ENCODE measurements at regions of chr16 and their contacts with region 1.

Region 1: DNA sequence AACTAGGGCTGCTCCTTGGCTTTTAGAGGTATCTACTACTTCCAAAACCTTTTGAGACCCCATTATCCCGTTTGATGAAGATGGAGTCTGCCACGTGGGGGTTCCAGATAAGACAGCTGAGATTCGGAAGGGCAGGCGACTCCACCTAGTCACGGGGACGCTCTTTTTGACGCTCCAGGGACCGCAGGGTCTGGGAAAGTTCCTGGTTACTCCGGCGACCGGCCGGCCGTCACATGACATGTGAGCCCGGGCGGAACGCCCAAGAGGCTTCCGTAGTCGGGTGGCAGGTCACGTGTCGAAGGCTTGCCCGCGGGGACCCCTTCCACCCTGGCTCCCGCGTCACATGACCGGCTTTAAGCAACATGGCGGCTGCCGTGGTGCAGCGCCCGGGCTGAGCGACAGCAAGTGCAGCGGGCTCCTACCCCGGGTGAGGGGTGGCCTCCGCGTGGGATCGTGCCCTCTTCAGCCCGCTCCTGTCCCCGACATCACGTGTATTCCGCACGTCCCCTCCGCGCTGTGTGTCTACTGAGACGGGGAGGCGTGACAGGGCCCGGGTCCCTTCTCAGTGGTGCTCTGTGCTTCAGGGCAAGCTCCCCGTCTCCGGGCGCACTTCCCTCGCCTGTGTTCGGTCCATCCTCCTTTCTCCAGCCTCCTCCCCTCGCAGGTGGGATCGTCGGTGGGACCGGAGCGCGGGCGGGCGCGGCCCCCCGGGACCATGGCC is at the start of gene SPNS1:
- DNase-seq: peak; percentile 97
- H3K4me3 Mint-ChIP-seq: peak within 1 kb of the TSS; percentile 88
- H3K27ac Mint-ChIP-seq: peak within 1 kb of the TSS; percentile 90
- H3K4me1 Mint-ChIP-seq: peaks cover 31% of the 10 kb centered on the region
- H3K27me3 Mint-ChIP-seq: no peaks in the 10 kb centered on the region
- total RNA-seq, gene SPNS1: 11.3 to 12.0 TPM

Region 2: DNA sequence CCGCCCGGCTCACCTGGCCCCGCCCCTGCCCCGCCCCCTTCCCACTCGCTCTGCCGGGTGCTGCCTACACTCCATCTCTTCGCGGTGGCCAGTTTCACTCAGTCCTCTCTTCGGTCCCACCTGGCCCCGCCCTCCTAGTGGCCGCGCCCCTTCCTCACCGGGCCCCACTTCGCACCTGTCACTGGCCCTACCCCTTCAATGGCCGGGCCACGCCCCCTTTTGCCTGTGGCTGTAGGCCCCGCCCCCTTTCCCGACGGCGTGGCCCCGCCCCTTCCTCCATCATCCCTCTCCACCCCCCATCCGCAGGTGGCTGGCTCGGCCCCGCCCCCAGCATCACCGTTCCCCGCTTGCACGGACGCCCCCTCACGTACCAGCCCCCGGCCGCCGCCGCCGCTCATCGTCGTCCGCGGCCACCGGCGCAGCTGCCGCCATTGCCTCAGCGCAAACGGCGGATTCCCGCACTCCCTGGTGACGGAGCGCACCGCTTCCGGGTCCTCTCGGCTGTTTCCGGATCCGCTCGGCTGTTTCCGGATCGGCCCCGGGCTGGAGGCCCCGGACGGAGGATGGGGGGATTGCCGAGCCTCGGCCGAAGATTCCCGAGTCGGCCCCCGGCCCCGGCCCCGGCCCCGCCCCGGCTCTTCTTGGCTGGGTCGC is 49.7 kb before region 1 on chr16 and contains the start of gene RABEP2:
- CTCF ChIA-PET with region 1: no interaction called
- POLR2A ChIA-PET with region 1: no interaction called
- intact Hi-C with region 1: loop called (anchors 1 kb)
- DNase-seq: peak; percentile 97
- H3K4me3 Mint-ChIP-seq: peak within 1 kb of the TSS; percentile 94
- H3K27ac Mint-ChIP-seq: peak within 1 kb of the TSS; percentile 98
- H3K4me1 Mint-ChIP-seq: peaks cover 9% of the 10 kb centered on the region
- H3K27me3 Mint-ChIP-seq: no peaks in the 10 kb centered on the region
- total RNA-seq, gene RABEP2: 11.3 to 12.0 TPM

Region 3: DNA sequence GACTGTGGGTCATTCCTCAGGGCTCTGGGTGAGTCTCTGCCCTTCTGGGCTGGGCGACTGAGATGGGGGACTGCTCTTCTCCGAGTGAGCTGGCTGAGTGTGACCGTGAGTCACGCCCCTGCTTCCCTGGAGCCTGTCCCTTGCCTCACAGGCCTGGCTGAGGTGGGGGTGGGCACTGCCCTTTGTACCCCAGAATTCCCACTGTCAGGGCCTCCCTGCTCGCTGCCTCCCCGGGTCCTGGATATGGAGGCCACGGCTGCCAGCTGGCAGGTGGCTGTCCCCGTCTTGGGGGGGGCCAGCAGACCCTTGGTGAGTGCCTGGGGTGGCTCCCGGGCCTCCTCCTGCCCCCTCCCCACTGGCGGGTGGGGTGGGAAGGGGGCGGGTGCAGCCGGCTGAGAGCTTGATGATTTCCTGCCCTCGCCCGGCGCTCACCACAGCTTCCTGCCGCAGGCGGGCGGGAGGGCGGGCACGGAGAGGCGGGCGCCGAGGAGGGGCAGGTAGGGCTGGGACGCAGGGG is 10.1 kb after region 1 on chr16 and contains the start of gene LAT:
- CTCF ChIA-PET with region 1: interaction called, 31 read pairs
- POLR2A ChIA-PET with region 1: interaction called, 10 read pairs
- intact Hi-C with region 1: loop called (anchors 1 kb)
- DNase-seq: peak; percentile 89
- H3K4me3 Mint-ChIP-seq: peak within 1 kb of the TSS; percentile 100
- H3K27ac Mint-ChIP-seq: peak within 1 kb of the TSS; percentile 98
- H3K4me1 Mint-ChIP-seq: peaks cover 39% of the 10 kb centered on the region
- H3K27me3 Mint-ChIP-seq: no peaks in the 10 kb centered on the region
- total RNA-seq, gene LAT: 250 to 276 TPM

Region 4: GRCh38 chr16:28990375-28991040 is 15.9 kb after region 1 on chr16:
- CTCF ChIA-PET with region 1: interaction called, 31 read pairs
- POLR2A ChIA-PET with region 1: interaction called, 10 read pairs
- intact Hi-C with region 1: loop called (anchors 1 kb)
- DNase-seq: peak; percentile 89
- H3K4me3 Mint-ChIP-seq: peak overlapping the region; percentile 69
- H3K27ac Mint-ChIP-seq: peak overlapping the region; percentile 98
- H3K4me1 Mint-ChIP-seq: peaks cover 50% of the 10 kb centered on the region
- H3K27me3 Mint-ChIP-seq: no peaks in the 10 kb centered on the region

Region 5: DNA sequence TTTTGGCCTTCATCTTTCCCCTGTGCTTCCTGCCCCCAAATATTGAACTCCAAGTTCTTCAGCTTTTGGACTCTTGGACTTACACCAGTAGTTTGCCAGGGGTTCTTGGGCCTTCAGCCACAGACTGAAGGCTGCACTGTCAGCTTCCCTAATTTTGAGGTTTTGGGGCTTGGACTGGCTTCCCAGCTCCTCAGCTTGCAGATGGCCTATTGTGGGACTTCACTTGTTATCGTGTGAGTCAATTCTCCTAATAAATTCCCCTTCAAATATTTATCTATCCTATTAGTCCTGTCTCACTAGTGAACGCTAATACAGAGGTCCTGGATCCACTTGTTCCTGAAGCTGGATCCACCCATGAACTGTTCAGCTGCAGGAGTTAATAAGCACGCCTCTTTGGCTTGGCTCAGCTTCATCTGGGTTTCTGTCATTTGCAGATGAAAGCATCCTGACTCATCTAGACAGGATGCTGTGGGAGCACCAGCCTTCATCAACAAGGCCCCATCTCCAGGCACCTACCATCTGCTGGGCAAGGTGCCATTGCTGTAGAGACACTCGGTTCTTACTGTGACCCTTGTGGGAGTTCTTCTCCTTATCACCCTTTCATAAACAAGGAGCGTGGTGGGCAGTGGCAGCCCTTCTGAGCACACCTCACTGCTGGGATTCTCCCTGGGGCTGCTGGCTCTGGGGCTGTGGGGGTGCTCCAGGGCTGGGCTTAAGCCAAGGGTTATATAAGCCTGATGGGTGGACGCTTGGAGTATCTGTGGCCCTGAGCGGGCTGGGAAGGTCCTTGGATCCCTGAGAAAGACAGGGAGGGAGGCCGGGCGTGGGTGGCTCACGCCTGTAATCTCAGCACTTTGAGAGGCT is 33.4 kb after region 1 on chr16:
- CTCF ChIA-PET with region 1: interaction called, 3 read pairs
- POLR2A ChIA-PET with region 1: interaction called, 4 read pairs
- intact Hi-C with region 1: loop called (anchors 1 kb)
- DNase-seq: peak; percentile 89
- H3K4me3 Mint-ChIP-seq: peak overlapping the region; percentile 34
- H3K27ac Mint-ChIP-seq: peak overlapping the region; percentile 88
- H3K4me1 Mint-ChIP-seq: peaks cover 54% of the 10 kb centered on the region
- H3K27me3 Mint-ChIP-seq: no peaks in the 10 kb centered on the region

Region 6: DNA sequence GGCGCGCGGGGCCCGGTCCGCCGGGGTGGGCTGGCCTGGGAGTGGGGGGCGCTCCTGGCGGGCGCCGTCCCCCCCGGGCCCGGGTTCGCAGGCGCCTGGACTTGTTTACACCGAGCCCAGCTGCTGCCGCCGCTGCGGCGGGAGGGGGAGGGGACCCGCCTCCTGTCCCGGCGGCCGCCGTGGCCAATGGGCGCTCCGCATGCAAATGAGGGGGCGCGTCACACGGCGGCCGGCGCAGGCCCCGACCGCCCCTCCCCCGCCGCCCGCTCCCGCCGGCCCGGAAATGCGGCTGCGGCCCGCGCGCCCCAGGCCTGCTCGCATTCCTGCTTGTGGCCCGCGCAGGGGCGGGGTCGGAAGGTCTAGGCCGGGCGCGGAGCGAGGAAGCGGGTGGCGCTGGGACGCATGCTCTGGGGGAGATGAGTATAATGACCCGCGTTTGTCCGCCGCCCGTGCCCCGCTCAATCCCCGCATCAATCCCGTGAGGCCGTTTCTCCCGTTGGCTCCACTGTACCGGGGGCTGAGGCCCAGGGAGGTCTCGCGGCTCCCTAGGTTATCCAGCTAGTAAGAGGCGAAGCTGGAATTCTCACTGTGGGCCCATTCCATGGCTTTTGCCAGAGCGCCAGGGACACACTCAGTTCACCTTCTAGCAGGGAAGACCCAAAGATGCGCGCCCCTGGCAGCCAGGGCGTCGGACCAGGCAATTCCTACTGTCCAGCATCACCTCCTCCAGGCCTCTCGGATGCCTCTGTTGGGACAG is 1121.7 kb after region 1 on chr16 and contains the start of gene YPEL3:
- CTCF ChIA-PET with region 1: no interaction called
- POLR2A ChIA-PET with region 1: no interaction called
- intact Hi-C with region 1: no loop called
- DNase-seq: peak; percentile 93
- H3K4me3 Mint-ChIP-seq: peak within 1 kb of the TSS; percentile 85
- H3K27ac Mint-ChIP-seq: peak within 1 kb of the TSS; percentile 88
- H3K4me1 Mint-ChIP-seq: peaks cover 36% of the 10 kb centered on the region
- H3K27me3 Mint-ChIP-seq: no peaks in the 10 kb centered on the region
- total RNA-seq, gene YPEL3: 32.5 to 36.9 TPM

Measured in activated CD4-positive, alpha-beta memory T cell treated with anti-CD3 and anti-CD28 coated beads for 36 hours (primary cell).